ENCODE measurements at regions of chr17 and their contacts with region 1.

Region 1: DNA sequence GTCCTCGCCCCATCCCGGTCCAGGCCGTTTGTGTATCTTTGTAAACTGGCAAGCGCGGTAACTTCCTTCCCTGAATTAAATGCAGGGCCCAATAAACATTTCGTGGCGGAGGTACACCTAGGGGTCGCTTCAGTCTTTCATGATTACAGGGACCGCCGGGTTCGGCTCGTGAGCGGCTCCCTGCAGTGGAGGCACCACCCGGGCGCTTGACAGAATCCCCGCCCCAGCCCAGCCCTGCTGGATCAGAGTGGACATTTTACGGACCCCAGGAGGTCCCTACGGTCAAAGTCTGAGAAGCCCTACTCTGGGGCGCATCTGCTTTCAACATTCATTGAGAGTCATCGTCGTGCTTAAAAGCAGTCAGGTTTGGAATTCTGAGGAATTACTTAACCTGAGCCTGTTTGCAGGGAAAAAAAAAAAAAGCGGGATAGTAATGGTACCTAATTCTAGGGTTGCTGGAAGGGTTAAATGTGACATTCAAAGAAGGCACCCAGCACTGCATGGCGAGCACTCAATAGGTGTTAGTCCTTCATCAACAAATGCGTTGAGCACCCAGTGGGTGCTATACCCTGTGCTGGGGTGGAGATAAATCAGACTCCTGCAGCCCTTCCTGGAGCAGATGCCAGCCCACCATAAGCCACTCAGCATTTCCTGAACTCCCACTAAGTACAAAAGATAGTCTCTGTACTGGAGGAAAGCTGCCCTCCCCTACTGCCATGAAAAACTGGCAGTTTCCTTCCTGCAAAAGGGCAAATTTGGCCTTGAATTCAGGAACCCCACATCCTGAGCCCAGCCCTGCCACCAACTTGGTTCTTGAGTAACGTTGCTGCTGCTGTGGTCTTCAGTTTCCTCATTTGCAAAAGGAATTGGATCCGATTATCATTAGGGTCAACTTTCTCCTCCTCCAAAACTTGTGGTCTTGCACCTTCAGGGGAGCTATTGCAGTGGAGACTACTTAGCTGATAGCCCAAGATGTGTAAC is 658 bp upstream of the DUSP3 start:
- DNase-seq: no peak
- ATAC-seq: peak; percentile 6
- H3K4me3 ChIP-seq: peak overlapping the region; percentile 91 to 96
- H3K27ac ChIP-seq: peak overlapping the region; percentile 99
- H3K4me1 ChIP-seq: peaks cover 17 to 51% of the 10 kb centered on the region in 2 donors
- H3K27me3 ChIP-seq: no peaks in the 10 kb centered on the region
- CTCF ChIP-seq: no peak

Region 2: GRCh38 chr17:43832976-43833829 is 53.8 kb after region 1 on chr17 and contains the start of gene MPP3:
- intact Hi-C with region 1: loop called in 1 of 2 experiments (anchors 10 kb)
- DNase-seq: peak; percentile 57 to 91 (median 70)
- ATAC-seq: peak; percentile 93
- H3K4me3 ChIP-seq: peak within 1 kb of the TSS; percentile 64 to 66
- H3K27ac ChIP-seq: peak within 1 kb of the TSS; percentile 44 to 76
- H3K4me1 ChIP-seq: peaks cover 12 to 28% of the 10 kb centered on the region in 2 donors
- H3K27me3 ChIP-seq: peaks cover 0 to 37% of the 10 kb centered on the region in 2 donors
- CTCF ChIP-seq: no peak
- polyA plus RNA-seq, gene MPP3: 8.0 to 14.4 (median 11.6) TPM